ENCODE measurements at regions of chr11 and their contacts with region 1.

Region 1: DNA sequence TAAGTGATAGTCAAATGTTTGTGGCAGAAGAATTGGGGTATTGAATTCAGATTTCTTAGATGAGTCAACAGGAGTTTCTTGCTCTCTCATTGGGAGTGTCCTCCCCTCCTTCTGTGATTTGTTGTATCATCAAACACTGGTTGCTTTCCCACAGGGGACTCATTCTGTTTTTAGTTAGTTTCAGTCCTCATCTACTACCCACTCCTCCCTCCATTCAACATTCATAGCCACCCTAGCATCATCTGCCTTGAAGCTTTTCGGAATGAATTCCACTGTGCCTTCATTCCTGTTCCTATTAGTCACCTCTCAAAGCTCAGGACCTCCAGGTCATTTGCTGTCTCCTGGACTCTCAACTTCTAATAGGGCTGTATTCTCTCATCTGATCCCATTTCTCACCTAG is 31.5 kb upstream of the RAB38 start:
- DNase-seq: no peak
- ATAC-seq: no peak

Region 2: DNA sequence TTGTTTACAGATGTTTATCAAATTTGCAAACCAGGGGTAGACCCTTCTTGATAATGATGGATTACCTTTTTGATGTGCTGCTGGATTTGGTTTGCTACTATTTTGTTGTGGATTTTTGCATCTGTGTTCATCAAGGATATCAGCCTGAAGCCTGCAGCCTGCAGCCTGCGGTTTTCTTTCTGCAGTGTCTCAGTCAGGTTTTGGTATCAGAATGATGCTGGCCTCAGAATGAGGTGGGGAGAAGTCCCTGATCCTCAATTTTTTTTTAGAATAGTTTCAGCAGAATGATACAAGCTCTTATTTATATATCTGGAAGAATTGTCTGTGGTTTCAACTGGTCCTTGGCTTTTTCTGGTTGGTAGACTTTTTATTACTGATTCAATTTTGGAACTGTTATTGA is 11.8 kb before region 1 on chr11:
- intact Hi-C with region 1: loop called (anchors 1 kb)
- DNase-seq: no peak
- ATAC-seq: no peak

Measured in sciatic nerve (tissue), 2 donors.